ENCODE measurements at regions of chr5 and their contacts with region 1.

Region 1: DNA sequence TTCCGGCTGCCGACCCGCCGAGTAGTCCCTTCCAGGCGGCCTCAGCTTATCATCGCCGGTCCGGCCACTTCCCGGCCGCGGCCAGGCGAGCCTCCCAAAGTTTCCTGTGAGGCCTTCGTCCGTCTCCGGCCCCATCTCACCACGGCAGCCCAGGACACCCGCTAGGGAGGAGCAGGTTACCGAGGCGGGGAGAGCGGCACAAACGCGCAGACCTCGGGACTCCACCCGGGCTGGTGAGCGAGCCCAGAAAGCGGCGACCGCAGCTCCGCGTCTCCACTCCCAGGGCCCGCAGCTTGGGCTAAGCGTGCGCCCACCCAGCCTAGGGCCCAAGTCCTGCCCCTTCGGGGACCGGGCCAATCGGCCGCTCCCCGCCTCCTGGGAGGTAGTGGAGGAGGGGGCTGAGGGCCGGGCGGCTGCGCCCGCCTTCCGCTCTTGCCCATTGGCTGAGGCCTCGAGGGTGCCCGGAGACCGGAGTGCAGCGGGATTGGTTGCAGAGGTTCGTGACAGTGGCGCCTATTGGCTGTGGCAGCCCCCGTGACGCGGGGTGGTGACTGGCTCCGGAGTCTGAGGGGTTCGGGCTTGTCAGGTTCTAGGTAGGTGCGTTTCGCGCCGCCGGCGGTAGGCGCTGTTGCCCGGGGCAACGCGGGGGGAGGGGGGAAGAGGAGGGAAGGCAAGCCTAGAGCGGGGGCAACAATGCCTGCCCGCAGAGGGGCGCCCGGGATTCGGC is 867 bp downstream of the FER start:
- H3K4me3 ChIP-seq: peak overlapping the region; percentile 68
- H3K27ac ChIP-seq: peak overlapping the region; percentile 91
- H3K4me1 ChIP-seq: peaks cover 4% of the 10 kb centered on the region
- CTCF ChIP-seq: peak; percentile 97

Region 2: DNA sequence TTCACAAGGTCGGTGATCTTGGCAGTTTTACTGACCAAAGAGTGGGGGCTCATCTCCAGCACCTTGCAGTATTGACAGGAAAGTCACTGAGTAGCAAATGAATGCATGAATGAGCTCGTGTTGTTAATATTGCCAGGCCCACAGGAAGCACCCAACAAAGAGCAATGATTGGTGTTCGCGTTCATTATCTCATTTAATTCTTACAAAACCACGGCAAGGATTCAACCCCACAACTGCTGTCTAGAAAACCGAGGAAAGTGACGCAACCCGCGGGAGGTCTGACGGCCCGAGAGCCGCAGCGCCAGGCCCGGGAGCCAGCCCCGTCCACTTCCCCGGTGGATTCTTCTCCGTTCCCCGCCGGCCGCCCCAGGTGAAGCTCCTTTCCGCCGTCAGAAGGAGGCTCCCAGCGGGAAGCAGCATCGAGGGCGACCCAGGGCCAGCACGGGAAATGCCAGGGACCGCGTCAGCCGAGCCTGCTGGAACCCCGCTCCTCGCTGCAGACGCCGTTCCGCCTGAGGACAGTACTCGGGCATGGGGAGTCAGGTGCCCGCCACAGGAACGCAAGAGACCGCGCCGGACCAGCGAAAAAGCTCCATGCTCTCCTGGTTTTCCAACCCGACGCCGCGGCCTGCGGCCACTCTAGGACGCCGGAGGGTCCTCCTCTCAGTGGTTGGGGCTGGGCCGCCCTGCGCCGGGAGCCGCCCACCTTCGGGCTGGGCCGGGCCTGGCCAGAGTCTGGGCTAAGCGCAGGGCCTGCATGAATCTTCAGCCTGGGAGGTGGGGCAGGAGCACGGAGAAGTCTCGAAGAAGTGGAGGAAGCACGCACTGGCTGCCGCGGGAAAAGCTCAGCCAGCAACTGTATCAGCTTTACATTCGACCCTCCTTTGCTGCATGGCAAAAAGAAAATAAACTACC is 20.7 kb before region 1 on chr5:
- CTCF ChIA-PET with region 1: interaction called, 4 read pairs
- POLR2A ChIA-PET with region 1: interaction called, 49 read pairs
- H3K4me3 ChIP-seq: peak overlapping the region; percentile 84
- H3K27ac ChIP-seq: peak overlapping the region; percentile 87
- H3K4me1 ChIP-seq: no peaks in the 10 kb centered on the region
- CTCF ChIP-seq: no peak

Region 3: DNA sequence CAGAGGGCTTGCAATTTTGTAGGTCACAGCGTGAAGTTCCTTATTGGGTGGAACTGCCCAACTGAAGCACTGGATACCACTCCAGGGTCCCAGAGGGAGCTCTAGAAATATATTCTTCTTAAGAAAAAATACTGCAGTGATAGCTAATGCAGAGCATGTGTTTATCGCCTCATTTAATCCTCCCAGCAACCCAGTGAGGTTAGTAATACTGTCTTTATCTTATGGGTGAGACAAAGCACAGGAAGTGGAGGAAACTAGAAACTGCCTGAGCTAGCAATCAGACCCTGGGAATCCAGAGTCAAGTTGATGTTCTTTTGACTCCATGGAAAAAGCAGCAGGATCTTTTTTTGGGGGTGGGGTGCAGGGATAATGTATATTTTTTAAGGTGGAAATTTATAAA is 507.9 kb after region 1 on chr5:
- CTCF ChIA-PET with region 1: no interaction called
- POLR2A ChIA-PET with region 1: no interaction called
- H3K4me3 ChIP-seq: no peak overlapping the region
- H3K27ac ChIP-seq: no peak overlapping the region
- H3K4me1 ChIP-seq: no peaks in the 10 kb centered on the region
- CTCF ChIP-seq: no peak

Region 4: GRCh38 chr5:109409844-109410388 is 661.4 kb after region 1 on chr5 and contains the start of gene PJA2:
- CTCF ChIA-PET with region 1: interaction called, 3 read pairs
- POLR2A ChIA-PET with region 1: interaction called, 11 read pairs
- H3K4me3 ChIP-seq: peak within 1 kb of the TSS; percentile 67
- H3K27ac ChIP-seq: peak within 1 kb of the TSS; percentile 91
- H3K4me1 ChIP-seq: peaks cover 17% of the 10 kb centered on the region; the same call in 1 of the 2 replicates
- CTCF ChIP-seq: no peak; the same call in 1 of the 2 replicates

Measured in HEK293 (cell line).